PC-3 (cell line): ENCODE measurements at regions of chr17 and their contacts with region 1.

Region 1: DNA sequence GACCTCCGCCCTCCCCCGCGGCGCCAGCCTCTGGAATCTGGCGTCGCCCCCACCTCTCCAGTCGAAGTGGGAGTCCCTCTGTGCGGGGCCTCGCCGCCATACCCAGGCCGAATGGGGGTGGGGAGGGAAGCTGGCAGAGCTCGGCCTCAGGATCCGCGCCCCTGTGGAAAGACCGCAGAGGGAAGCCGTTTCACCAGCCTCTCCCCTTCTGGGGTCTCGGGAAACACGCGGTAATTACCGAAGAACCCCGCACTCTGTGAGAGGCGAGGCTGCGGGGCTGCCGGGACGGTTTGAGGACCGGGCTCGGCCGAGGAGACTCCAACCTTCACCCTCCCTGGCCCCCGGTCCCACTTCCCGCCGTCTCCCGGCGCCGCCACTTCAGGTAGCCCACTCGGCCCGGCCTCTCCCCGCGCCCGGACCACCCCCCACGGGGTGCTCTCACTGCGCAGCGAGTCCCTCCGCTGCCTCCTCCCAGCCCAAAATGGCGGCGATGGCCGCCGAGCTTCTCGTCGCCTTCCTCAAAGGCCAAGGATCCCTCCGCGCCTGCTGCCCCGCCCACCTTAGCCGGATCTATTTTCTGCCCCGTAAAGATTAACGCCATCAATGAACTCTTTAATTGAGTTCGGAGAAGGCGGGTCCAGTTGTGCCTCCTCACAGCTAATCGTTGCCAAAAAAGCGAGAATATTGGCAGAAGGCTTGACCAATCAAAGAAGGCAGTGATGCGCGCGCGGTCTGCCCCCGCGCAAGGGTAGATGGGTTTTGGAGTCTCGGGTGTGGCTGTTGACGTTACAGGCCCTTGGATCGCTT is 453 bp upstream of the HEXIM2 start:
- DNase-seq: peak; percentile 100
- ATAC-seq: peak; percentile 87
- H3K4me3 ChIP-seq: peak overlapping the region; percentile 83
- H3K27ac ChIP-seq: peak overlapping the region; percentile 91
- H3K4me1 ChIP-seq: peaks cover 39% of the 10 kb centered on the region
- H3K27me3 ChIP-seq: no peaks in the 10 kb centered on the region
- CTCF ChIP-seq: no peak; the same call in 1 of the 2 replicates

Region 2: DNA sequence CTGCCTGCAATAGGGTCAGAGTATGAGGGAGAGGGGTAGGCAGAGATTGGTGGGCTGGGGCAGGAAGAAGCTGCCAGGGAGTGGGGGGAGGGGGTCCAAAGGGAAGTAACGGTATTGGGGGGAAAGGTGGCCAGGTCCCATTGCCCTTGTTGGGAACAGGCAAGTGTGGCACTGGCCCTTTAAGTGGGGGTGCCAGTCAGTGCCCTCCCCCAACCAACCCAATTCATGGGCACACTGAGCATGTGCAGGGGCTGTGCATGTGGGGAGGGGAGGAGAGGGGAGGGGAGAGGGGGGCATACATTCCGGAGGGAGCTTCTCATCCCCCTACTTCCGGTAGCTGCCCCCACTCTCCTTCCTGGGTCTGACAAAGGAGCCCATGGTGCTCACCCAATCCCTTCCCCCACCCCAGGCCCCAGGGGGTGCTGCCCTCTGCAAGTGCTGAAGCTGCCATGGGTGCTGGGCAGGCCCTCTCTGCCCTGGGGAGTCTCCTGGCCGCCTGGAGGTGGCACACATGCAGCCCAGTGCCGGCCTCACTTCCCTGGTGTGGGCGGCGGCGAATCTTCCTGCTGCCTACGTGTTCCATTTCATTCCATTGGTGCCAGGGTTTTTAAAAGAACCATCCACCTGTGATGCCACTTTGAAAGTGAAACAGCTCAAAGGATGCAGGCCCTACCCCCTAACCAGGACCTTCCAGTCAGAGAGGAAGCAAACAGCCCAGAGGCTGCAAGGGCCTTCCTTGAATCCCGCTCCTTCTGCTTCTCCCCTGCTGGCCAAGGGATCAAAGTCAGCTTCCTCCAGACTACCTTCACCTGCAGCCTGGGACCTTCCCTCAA is 11.4 kb after region 1 on chr17:
- CTCF ChIA-PET with region 1: interaction called, 4 read pairs
- POLR2A ChIA-PET with region 1: interaction called, 15 read pairs
- intact Hi-C with region 1: loop called (anchors 1 kb)
- DNase-seq: peak; percentile 97
- ATAC-seq: peak; percentile 63
- H3K4me3 ChIP-seq: peak overlapping the region; percentile 46; the same call in 1 of the 2 replicates
- H3K27ac ChIP-seq: peak overlapping the region; percentile 95
- H3K4me1 ChIP-seq: peaks cover 59% of the 10 kb centered on the region
- H3K27me3 ChIP-seq: no peaks in the 10 kb centered on the region
- CTCF ChIP-seq: peak; percentile 34; the same call in 1 of the 2 replicates

Region 3: GRCh38 chr17:45197555-45198334 is 36.5 kb after region 1 on chr17:
- CTCF ChIA-PET with region 1: interaction called, 12 read pairs
- POLR2A ChIA-PET with region 1: interaction called, 4 read pairs
- intact Hi-C with region 1: no loop called
- DNase-seq: peak; percentile 99
- ATAC-seq: peak; percentile 99
- H3K4me3 ChIP-seq: peak overlapping the region; percentile 8; the same call in 1 of the 2 replicates
- H3K27ac ChIP-seq: no peak overlapping the region
- H3K4me1 ChIP-seq: peaks cover 16% of the 10 kb centered on the region
- H3K27me3 ChIP-seq: no peaks in the 10 kb centered on the region
- CTCF ChIP-seq: peak; percentile 100

Region 4: GRCh38 chr17:46199379-46199778 is 1038.2 kb after region 1 on chr17:
- CTCF ChIA-PET with region 1: no interaction called
- POLR2A ChIA-PET with region 1: no interaction called
- intact Hi-C with region 1: no loop called
- DNase-seq: no peak
- ATAC-seq: no peak
- H3K4me3 ChIP-seq: no peak overlapping the region
- H3K27ac ChIP-seq: no peak overlapping the region
- H3K4me1 ChIP-seq: peaks cover 5% of the 10 kb centered on the region
- H3K27me3 ChIP-seq: no peaks in the 10 kb centered on the region
- CTCF ChIP-seq: no peak